ENCODE measurements at regions of chr5 and their contacts with region 1.

Region 1: DNA sequence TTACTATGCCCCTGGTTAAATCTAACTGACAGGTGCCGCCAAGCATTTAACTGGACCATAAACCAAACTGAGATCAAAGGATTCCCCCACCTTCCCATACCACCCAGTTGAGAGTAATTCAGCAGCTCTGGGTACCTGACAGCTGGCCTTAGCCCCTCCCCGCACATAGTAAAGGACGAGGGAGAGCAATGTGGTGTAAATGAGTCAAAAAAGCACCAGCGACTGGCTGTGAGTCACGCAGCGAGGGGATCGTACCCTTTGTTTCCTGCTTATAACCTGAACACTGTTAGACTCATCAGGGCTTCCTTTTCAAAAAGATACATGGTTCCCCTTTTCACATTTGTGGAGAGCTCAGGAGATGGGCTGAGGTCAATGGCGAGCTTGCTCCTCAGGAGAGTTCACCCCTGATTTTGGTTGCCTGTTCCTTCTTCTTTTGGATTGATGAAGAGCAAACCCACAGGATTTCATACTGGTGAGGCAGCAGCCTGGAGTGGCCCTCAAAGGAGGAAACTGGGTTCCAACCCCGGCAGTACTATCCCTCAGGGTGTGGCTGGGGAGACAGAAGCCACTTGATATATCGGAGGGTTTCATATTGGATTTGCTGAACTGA is 71.5 kb downstream of the ANKRD33B start:
- DNase-seq: no peak
- H3K4me3 ChIP-seq: no peak overlapping the region
- H3K27ac ChIP-seq: no peak overlapping the region
- H3K4me1 ChIP-seq: no peaks in the 10 kb centered on the region
- H3K27me3 ChIP-seq: no peaks in the 10 kb centered on the region
- CTCF ChIP-seq: no peak
- POLR2A ChIP-seq: no peak

Region 2: GRCh38 chr5:10283927-10284635 is 351.3 kb before region 1 on chr5:
- intact Hi-C with region 1: loop called (anchors 10 kb)
- DNase-seq: peak; percentile 94
- H3K4me3 ChIP-seq: no peak overlapping the region
- H3K27ac ChIP-seq: no peak overlapping the region
- H3K4me1 ChIP-seq: no peaks in the 10 kb centered on the region
- H3K27me3 ChIP-seq: no peaks in the 10 kb centered on the region
- CTCF ChIP-seq: peak; percentile 68 to 86 (median 79)
- POLR2A ChIP-seq: no peak